Colonic mucosa (tissue), 4 donors: ENCODE measurements at regions of chr17 and their contacts with region 1.

Region 1: DNA sequence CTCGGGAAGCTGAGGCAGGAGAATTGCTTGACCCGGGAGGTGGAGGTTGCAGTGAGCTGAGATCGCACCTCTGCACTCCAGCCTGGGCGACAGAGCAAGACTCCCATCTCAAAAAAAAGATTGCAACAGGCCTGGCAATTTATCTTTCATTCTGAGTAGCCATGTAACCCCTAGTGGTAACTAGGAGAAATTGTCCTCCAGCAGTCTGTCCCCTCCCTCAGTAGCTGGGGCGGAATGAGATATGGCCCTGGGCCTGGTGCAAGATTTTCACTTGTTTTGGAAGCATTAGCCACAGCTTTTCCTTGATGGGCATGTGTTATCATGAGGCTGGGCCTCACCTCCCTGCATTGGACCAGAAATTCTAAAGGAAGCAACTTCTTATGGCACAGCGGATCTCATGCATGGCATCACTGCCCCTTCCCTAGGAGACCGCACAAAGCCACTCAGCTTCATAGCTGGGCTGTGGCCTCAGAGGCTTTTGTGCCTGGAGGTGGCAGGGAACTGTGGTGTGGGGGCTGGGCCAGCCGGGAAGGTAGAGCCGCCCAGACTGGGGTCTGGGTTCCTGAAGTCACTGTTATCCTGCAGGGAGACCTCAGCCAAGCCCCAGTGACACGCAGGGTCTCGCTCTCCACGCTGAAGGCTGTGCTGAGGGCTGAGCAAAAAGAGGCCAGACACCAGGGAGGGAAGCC is 13.4 kb downstream of the NATD1 start:
- DNase-seq: no peak
- H3K4me3 ChIP-seq: no peak overlapping the region
- H3K27ac ChIP-seq: no peak overlapping the region
- H3K4me1 ChIP-seq: no peaks in the 10 kb centered on the region
- H3K27me3 ChIP-seq: no peaks in the 10 kb centered on the region
- CTCF ChIP-seq: peak; percentile 30

Region 2: DNA sequence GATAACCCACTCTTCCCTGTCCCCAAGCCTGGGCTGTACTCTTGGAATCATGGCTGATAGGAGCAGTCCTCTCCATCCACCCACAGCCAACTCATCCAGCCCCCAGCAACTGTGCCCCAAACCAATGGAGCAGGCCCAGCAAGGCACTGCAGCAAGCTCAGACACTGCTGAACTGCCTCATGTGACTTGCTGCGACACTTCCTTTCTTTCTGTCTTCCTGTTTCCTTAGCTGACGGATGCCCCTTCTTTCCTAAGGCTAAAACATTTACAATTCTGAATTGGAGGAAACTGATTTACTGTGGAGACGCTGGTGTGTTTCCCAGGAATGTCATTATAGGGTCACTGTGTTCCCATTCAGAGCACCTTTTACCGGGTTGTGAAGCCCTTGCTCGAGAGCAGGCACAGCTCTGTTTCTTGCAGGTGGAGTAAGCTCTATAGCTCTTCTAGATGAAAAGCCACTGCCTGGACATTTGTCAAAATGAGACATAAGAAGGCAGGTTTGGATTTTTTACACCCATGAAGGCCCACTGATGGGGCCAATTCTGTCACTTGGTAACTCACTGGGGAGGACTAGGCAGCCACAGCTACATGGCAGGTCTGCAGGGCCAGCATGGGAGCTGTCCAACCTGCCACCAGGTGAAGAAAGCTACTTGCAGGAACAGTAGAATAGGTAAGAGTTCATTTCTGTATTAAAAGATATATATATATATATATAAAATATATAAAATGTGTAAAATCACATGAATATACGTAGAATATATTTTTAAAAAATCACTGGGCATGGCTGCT is 53.2 kb before region 1 on chr17:
- intact Hi-C with region 1: loop called (anchors 5 kb)
- DNase-seq: no peak
- H3K4me3 ChIP-seq: no peak overlapping the region
- H3K27ac ChIP-seq: no peak overlapping the region
- H3K4me1 ChIP-seq: no peaks in the 10 kb centered on the region
- H3K27me3 ChIP-seq: no peaks in the 10 kb centered on the region
- CTCF ChIP-seq: no peak